ENCODE measurements at regions of chr1 and their contacts with region 1.

Region 1: GRCh38 chr1:94020731-94021579 is 100.0 kb downstream of the ABCA4 start:
- DNase-seq: peak; percentile 54 to 65
- ATAC-seq: peak; percentile 56 to 79 (median 78)
- H3K4me3 ChIP-seq: no peak overlapping the region
- H3K4me3 Mint-ChIP-seq: peak overlapping the region; percentile 63
- H3K27ac ChIP-seq: peak overlapping the region; percentile 76
- H3K27ac Mint-ChIP-seq: peak overlapping the region; percentile 87 to 94
- H3K4me1 ChIP-seq: peaks cover 68% of the 10 kb centered on the region
- H3K4me1 Mint-ChIP-seq: peaks cover 70 to 74% of the 10 kb centered on the region in 2 donors
- H3K27me3 ChIP-seq: no peaks in the 10 kb centered on the region
- H3K27me3 Mint-ChIP-seq: peaks cover 0 to 8% of the 10 kb centered on the region in 2 donors
- CTCF ChIP-seq: no peak

Region 2: DNA sequence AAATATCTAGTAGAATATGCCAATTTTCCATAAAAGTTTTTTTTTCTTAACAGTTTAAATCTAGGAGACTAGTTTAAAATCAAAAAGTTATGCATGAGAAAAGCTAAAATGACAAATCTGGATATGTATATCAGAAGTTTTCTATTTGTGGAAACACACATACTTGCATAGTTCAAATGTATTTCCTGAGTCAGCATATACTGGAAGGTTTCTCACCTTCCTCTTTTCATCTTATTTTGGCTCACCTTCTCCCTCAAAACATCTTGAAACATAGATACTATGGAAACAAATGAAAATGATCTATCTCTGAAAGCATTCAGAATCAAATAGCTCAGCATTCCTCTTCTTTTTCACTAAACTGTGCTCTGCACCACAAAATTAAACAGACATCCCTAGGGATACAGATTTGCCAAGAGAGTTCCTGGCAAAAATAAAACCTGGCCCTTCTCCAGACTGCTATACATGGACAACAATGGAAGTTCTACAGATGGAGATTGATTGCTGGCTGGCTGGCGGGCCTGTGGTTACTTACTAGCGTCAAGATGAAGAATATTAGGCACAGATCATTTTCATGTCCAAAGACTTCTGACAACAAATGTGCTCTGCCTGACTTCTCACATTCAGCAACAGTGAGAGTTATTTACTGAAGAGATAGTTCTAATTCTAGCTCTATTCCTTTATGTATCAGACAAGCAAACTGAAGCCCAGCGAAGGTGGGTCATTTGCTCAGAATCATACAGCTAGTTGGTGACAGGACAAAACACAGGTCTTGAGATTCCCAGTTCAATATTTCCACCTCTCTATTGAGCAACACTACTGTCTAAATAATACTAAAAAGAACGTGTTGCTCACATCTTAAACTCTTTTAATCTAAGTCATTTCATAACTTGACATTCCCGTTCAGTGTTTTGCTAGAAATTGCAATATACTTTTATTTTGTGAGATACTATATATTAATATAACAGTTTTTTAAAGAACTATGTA is 1086.3 kb before region 1 on chr1:
- intact Hi-C with region 1: no loop called
- DNase-seq: no peak
- ATAC-seq: no peak
- H3K4me3 ChIP-seq: no peak overlapping the region
- H3K4me3 Mint-ChIP-seq: no peak overlapping the region
- H3K27ac ChIP-seq: no peak overlapping the region
- H3K27ac Mint-ChIP-seq: no peak overlapping the region
- H3K4me1 ChIP-seq: peaks cover 3% of the 10 kb centered on the region
- H3K4me1 Mint-ChIP-seq: peaks cover 42 to 49% of the 10 kb centered on the region in 2 donors
- H3K27me3 ChIP-seq: no peaks in the 10 kb centered on the region
- H3K27me3 Mint-ChIP-seq: no peaks in the 10 kb centered on the region
- CTCF ChIP-seq: no peak

Region 3: GRCh38 chr1:93749894-93750301 is 271.1 kb before region 1 on chr1:
- intact Hi-C with region 1: loop called (anchors 5 kb)
- DNase-seq: peak in 1 of 2 donors; percentile 13
- ATAC-seq: no peak
- H3K4me3 ChIP-seq: no peak overlapping the region
- H3K4me3 Mint-ChIP-seq: peak overlapping the region; percentile 79
- H3K27ac ChIP-seq: peak overlapping the region; percentile 82
- H3K27ac Mint-ChIP-seq: peak overlapping the region; percentile 97
- H3K4me1 ChIP-seq: peaks cover 29% of the 10 kb centered on the region
- H3K4me1 Mint-ChIP-seq: peaks cover 45 to 46% of the 10 kb centered on the region in 2 donors
- H3K27me3 ChIP-seq: no peaks in the 10 kb centered on the region
- H3K27me3 Mint-ChIP-seq: peaks cover 0 to 3% of the 10 kb centered on the region in 2 donors
- CTCF ChIP-seq: no peak

Region 4: DNA sequence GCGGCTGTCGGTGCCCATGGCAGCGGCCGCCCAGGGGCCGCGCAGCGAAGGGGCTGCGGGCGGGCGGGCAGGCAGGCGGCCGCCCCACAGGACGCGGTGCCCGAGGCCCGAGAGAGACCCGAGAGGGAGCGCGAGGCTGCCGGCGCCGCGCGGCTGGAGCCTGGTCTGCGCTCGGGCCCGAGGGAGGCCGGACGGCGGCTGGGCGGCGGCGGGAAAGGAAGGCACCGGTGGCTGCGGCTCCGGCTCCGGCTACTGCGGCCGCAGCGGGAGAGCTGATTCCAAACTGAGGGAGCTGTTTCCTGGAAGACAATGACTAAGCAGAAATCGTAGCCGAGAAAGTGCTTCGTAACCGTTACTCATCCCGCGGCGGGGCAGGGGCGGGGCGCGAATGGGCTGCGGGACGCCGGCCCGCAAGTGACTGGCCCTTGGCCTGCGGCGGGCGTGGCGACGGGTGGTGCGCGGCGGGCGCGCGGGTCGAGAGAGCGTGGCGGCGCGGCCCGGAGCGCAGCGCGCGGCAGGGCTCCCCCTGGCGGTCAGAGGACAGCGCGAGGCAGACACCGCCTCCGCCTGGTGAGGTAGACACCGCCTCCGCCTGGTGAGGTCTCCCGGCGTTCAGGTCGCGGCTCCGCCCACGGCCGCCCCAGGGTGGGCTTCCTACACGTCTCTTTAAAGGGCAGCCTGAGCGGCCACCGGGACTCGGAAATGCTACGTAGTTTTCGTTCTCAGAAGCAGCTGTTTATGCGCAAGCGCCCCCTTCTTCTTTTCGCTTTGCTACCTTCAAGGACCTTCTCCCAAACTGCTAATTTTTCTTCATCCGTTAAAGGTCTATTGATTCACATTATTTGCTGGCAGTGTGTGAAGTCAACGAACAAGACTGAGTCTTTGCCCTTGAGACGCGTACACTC is 111.6 kb before region 1 on chr1 and contains the start of gene GCLM:
- intact Hi-C with region 1: loop called (anchors 2 kb)
- DNase-seq: peak; percentile 92 to 95
- ATAC-seq: peak; percentile 89 to 98 (median 92)
- H3K4me3 ChIP-seq: peak within 1 kb of the TSS; percentile 66
- H3K4me3 Mint-ChIP-seq: peak within 1 kb of the TSS; percentile 96
- H3K27ac ChIP-seq: peak within 1 kb of the TSS; percentile 91
- H3K27ac Mint-ChIP-seq: peak within 1 kb of the TSS; percentile 94 to 97
- H3K4me1 ChIP-seq: peaks cover 13% of the 10 kb centered on the region
- H3K4me1 Mint-ChIP-seq: peaks cover 36% of the 10 kb centered on the region in 2 donors
- H3K27me3 ChIP-seq: no peaks in the 10 kb centered on the region
- H3K27me3 Mint-ChIP-seq: no peaks in the 10 kb centered on the region
- CTCF ChIP-seq: peak; percentile 96
- total RNA-seq, gene GCLM: 16.1 to 25.5 (median 18.6) TPM

Region 5: GRCh38 chr1:93990010-93990409 is 30.9 kb before region 1 on chr1:
- intact Hi-C with region 1: loop called (anchors 2 kb)
- DNase-seq: no peak
- ATAC-seq: peak; percentile 18 to 51 (median 41)
- H3K4me3 ChIP-seq: no peak overlapping the region
- H3K4me3 Mint-ChIP-seq: peak overlapping the region; percentile 58
- H3K27ac ChIP-seq: peak overlapping the region; percentile 29
- H3K27ac Mint-ChIP-seq: peak overlapping the region; percentile 63 to 88
- H3K4me1 ChIP-seq: peaks cover 24% of the 10 kb centered on the region
- H3K4me1 Mint-ChIP-seq: peaks cover 44 to 68% of the 10 kb centered on the region in 2 donors
- H3K27me3 ChIP-seq: no peaks in the 10 kb centered on the region
- H3K27me3 Mint-ChIP-seq: peaks cover 0 to 5% of the 10 kb centered on the region in 2 donors
- CTCF ChIP-seq: no peak

Region 6: DNA sequence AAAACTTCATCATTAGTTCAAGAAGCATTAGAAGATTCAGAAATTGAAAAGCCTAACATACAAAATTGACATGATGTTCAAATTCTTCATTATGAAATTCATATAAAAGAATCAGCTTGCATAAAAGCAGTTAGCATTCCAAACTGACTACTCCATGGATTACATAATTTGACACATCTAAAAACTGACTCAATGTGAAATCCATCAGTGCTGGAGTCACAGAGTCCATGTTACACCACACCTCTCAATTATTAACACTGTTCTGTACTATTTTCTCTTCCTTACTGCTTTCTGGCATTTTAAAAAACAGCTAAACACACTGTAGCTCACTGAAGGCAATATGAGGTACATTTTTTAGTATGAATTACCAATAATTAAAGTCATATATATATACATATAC is 188.5 kb after region 1 on chr1:
- intact Hi-C with region 1: no loop called
- DNase-seq: no peak
- ATAC-seq: no peak
- H3K4me3 ChIP-seq: no peak overlapping the region
- H3K4me3 Mint-ChIP-seq: no peak overlapping the region
- H3K27ac ChIP-seq: no peak overlapping the region
- H3K27ac Mint-ChIP-seq: no peak overlapping the region
- H3K4me1 ChIP-seq: no peaks in the 10 kb centered on the region
- H3K4me1 Mint-ChIP-seq: no peaks in the 10 kb centered on the region
- H3K27me3 ChIP-seq: no peaks in the 10 kb centered on the region
- H3K27me3 Mint-ChIP-seq: peaks cover 11 to 13% of the 10 kb centered on the region in 2 donors
- CTCF ChIP-seq: no peak

Region 7: GRCh38 chr1:94602316-94602715 is 581.4 kb after region 1 on chr1:
- intact Hi-C with region 1: loop called (anchors 1 kb)
- DNase-seq: peak; percentile 45 to 56
- ATAC-seq: peak; percentile 91 to 96 (median 93)
- H3K4me3 ChIP-seq: peak overlapping the region; percentile 2
- H3K4me3 Mint-ChIP-seq: peak overlapping the region; percentile 90
- H3K27ac ChIP-seq: no peak overlapping the region
- H3K27ac Mint-ChIP-seq: peak overlapping the region; percentile 73 to 87
- H3K4me1 ChIP-seq: peaks cover 11% of the 10 kb centered on the region
- H3K4me1 Mint-ChIP-seq: peaks cover 28 to 30% of the 10 kb centered on the region in 2 donors
- H3K27me3 ChIP-seq: peaks cover 39% of the 10 kb centered on the region
- H3K27me3 Mint-ChIP-seq: peaks cover 77 to 85% of the 10 kb centered on the region in 2 donors
- CTCF ChIP-seq: no peak